GM10248 (cell line): ENCODE measurements at regions of chr12 and their contacts with region 1.

Region 1: DNA sequence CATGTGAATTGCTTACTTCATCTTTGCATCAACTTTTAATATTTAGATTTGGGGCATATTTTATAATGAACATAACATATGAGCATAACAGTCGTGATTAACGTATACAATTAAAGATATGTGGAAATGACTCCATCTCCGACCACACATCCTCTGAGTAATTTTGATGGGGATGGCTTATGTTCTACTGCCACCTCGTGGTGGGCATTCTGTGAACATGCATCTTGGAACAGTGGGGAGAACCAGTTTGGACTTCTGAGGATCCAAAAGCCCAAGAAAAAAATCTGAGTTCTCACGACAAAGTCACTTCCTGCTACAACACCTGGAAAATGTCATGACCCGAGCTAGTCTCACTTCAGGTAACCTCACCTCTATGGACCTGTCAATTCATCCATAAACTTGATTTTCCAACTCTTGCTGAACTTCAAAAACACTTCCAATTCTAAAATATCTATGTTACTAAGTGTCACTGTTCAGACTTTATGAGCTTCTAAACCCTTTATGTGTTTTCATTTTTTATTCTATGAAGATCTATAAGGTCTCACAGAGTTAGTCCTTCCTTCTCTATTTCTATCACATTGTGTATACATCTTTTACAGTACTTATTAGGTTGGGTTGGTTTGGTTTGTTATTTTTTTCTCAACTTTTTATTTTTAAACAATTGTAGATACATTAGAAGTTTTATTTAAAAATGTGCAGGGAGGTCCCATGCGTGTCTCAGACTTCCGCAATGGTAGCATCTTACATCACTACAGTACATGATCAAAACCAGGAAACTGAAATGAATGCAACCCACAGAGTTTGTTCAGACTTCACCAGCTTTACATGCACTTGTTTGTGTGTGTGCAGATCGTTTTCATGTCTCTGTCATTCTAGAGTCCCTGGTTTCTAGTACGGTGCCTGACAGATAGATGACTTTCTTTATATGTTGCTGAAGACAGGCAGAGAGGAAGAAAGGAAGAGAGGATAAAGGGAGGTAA is 38.2 kb upstream of the STAB2 start:
- DNase-seq: peak; percentile 49
- CTCF ChIP-seq: peak; percentile 82

Region 2: GRCh38 chr12:102896067-102896466 is 652.8 kb before region 1 on chr12:
- CTCF ChIA-PET with region 1: interaction called, 12 read pairs
- POLR2A ChIA-PET with region 1: no interaction called
- DNase-seq: no peak
- CTCF ChIP-seq: no peak

Region 3: GRCh38 chr12:102960766-102961465 is 588.0 kb before region 1 on chr12:
- CTCF ChIA-PET with region 1: interaction called, 13 read pairs
- POLR2A ChIA-PET with region 1: no interaction called
- DNase-seq: no peak
- CTCF ChIP-seq: no peak

Region 4: DNA sequence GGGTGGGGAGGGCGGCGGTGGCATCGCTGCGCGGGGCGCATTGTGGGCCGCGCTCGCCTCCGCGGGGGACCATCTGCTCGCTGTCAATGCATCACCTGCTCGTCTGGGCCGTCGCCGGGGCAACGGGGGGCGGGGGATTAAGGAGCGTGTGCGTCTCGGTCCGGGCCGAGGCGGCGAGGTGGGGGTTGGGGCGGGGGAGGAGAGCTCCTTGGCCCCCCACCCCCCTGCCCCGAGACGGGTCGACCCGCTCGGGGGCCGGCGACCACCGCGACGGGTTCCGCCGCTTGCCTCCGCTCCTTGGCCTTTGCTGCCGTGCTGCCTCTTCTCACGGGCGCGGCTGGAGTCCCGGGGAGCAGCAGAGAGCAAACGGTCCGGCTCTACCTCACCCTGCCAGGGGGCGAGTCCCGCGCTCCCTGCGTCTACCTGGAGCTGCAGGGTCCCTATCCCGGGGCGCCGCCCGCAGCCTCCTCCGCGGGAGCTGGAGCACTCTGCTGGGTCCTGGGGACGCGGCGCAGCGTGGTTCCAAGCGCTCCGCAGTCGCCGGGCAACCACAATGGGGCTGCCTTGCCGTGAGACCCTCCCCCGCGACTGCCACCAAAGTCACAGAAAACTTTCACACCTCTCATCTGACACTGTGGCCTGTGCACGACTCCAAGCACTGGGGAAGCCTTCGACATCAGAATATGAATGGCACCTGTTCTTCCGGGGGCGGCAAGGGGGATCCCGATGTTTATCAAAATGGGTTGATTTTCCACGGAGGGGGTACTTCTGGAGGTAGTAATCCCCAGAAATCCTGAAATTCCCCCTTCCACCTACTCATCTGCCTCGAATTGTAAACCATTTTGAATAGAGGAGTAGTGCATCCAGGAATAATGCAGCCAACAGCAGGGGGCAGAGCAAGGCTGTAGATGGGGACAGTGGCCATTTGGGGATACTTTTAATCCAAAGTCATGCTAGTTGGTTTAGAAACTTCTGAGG is 53.1 kb before region 1 on chr12 and contains the start of gene C12orf42:
- CTCF ChIA-PET with region 1: interaction called, 57 read pairs
- POLR2A ChIA-PET with region 1: no interaction called
- DNase-seq: peak; percentile 78
- CTCF ChIP-seq: peak; percentile 75

Region 5: GRCh38 chr12:103530307-103531066 is 18.4 kb before region 1 on chr12:
- CTCF ChIA-PET with region 1: interaction called, 80 read pairs
- POLR2A ChIA-PET with region 1: no interaction called
- DNase-seq: peak; percentile 21
- CTCF ChIP-seq: no peak